Endothelial cell of umbilical vein (primary cell): ENCODE measurements at regions of chr19 and their contacts with region 1.

Region 1: DNA sequence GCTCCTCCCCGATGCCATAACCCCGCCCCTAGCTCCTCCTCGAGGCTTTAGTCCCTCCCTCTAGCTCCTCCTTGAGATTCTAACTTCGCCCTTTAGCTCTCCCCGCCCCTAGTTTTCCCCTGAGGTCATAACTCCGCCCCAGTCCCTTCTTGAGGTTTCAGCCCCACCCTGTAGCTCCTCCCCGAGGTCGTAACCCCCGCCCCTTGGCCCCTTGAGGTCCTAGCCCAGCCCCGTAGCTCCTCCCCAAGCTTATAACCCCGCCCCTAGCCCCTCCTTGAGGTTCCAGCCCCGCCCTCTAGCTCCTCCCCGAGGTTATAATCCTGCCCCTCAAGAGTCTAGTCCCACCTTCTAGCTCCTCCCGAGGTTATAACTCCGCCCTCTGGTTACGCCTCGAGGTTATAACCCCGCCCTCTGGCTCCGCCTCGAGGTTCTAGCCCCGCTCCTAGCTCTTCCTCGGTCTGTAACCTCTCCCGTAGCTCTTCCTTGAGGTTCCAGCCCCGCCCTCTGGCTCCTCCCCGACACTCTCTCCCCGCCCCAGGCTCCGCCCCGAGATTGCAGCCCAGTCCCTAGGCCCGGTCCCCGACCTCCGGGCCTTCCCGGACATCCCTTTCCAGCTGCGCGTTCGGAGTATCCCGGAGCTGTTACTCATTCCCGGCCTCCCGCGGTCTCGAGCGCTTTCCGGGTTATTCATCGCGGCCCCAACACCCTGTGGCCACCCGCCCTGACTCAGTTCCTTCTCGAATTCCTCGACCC is 1.4 kb downstream of the PLAUR start:
- DNase-seq: peak; percentile 99
- H3K4me3 ChIP-seq: peak overlapping the region; percentile 54 to 73 (median 73)
- H3K27ac ChIP-seq: peak overlapping the region; percentile 98
- H3K4me1 ChIP-seq: peaks cover 35% of the 10 kb centered on the region
- H3K27me3 ChIP-seq: no peaks in the 10 kb centered on the region
- CTCF ChIP-seq: no peak
- POLR2A ChIP-seq: no peak

Region 2: GRCh38 chr19:43619262-43620060 is 49.1 kb before region 1 on chr19 and contains the start of gene ZNF428:
- CTCF ChIA-PET with region 1: no interaction called
- POLR2A ChIA-PET with region 1: no interaction called
- dilution Hi-C with region 1: no loop called
- intact Hi-C with region 1: loop called (anchors 2 kb)
- DNase-seq: peak; percentile 95
- H3K4me3 ChIP-seq: peak within 1 kb of the TSS; percentile 31 to 75 (median 47)
- H3K27ac ChIP-seq: peak within 1 kb of the TSS; percentile 88
- H3K4me1 ChIP-seq: peaks cover 12% of the 10 kb centered on the region
- H3K27me3 ChIP-seq: no peaks in the 10 kb centered on the region
- CTCF ChIP-seq: no peak
- POLR2A ChIP-seq: peak; percentile 48
- total RNA-seq, gene ZNF428: 51.8 and 56.2 TPM in 2 replicates

Region 3: DNA sequence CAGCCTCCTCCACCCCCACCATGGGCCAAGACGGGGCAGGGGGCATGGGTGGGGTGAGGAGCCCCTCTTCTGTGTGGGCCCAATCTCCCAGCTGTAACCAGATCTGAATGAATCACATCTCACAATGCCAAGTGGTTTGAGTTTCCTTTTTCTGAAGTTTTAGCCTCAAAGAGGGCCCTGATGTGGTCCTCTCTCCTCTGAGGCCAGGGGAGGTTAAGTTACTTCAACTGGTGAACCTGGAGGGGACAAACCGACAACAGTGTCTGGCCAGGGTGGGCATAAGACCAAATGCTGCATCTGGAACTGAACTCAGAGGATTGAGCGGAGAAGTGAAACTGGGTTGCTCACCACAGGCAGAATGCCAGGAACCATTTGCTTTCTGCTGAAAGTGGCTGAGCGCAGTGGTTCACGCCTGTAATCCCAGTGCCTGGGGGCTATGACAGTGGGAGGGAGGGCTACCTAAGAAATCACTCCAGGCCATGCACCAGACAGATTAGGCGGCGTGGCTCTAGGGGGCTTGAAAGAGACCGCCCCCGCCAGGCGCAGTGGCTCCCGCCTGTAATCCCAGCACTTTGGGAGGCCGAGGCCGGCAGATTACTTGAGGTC is 31.9 kb after region 1 on chr19:
- CTCF ChIA-PET with region 1: interaction called, 13 read pairs
- POLR2A ChIA-PET with region 1: interaction called, 3 read pairs
- dilution Hi-C with region 1: no loop called
- intact Hi-C with region 1: loop called (anchors 1 kb)
- DNase-seq: peak; percentile 69
- H3K4me3 ChIP-seq: no peak overlapping the region
- H3K27ac ChIP-seq: peak overlapping the region; percentile 95
- H3K4me1 ChIP-seq: peaks cover 12% of the 10 kb centered on the region
- H3K27me3 ChIP-seq: no peaks in the 10 kb centered on the region
- CTCF ChIP-seq: no peak
- POLR2A ChIP-seq: no peak

Region 4: DNA sequence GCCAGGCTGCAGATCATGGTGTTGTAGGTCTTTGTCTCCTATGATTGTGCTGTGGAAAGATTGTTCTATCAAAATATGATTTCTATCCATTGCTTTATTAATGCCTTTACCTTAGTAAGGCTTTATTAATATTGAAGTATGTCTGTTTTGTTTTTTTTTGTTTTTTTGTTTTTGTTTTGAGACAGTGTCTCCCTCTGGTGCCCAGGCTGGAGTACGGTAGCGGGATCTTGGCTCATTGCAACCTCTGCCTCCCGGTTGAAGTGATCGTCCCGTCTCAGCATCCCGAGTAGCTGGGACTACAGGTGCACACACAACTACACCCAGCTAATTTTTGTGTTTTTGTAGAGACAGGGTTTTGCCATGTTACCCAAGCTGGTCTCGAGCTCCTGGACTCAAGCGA is 55.0 kb after region 1 on chr19:
- CTCF ChIA-PET with region 1: interaction called, 50 read pairs
- POLR2A ChIA-PET with region 1: interaction called, 9 read pairs
- dilution Hi-C with region 1: no loop called
- intact Hi-C with region 1: loop called (anchors 1 kb)
- DNase-seq: no peak
- H3K4me3 ChIP-seq: no peak overlapping the region
- H3K27ac ChIP-seq: no peak overlapping the region
- H3K4me1 ChIP-seq: peaks cover 5% of the 10 kb centered on the region
- H3K27me3 ChIP-seq: no peaks in the 10 kb centered on the region
- CTCF ChIP-seq: no peak
- POLR2A ChIP-seq: no peak

Region 5: DNA sequence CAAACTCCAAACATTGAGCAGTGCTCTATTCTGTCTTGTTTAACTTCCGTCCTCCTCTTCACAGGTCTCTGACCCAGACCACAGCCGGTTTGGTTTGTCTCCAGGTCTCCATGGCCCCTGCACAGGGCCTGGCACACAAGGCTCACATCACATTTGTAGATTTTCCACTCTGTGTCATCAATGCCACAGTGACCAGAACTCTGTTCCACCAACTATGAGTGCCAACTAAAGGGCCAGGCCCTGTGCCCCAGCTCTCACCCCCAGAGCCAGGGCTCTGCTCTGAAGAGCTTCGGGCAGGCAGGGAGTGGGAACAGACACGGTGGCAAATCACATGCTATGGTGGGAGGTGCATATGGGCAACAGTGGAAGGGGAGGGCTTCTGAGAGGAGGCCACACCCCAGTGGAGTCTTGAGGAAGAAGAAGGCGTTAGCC is 70.2 kb after region 1 on chr19:
- CTCF ChIA-PET with region 1: interaction called, 6 read pairs
- POLR2A ChIA-PET with region 1: no interaction called
- dilution Hi-C with region 1: no loop called
- intact Hi-C with region 1: loop called (anchors 5 kb)
- DNase-seq: no peak
- H3K4me3 ChIP-seq: no peak overlapping the region
- H3K27ac ChIP-seq: no peak overlapping the region
- H3K4me1 ChIP-seq: peaks cover 3% of the 10 kb centered on the region
- H3K27me3 ChIP-seq: no peaks in the 10 kb centered on the region
- CTCF ChIP-seq: no peak
- POLR2A ChIP-seq: no peak

Region 6: GRCh38 chr19:43747557-43748204 is 79.1 kb after region 1 on chr19:
- CTCF ChIA-PET with region 1: interaction called, 40 read pairs
- POLR2A ChIA-PET with region 1: interaction called, 4 read pairs
- dilution Hi-C with region 1: no loop called
- intact Hi-C with region 1: no loop called
- DNase-seq: no peak
- H3K4me3 ChIP-seq: no peak overlapping the region
- H3K27ac ChIP-seq: no peak overlapping the region
- H3K4me1 ChIP-seq: peaks cover 5% of the 10 kb centered on the region
- H3K27me3 ChIP-seq: no peaks in the 10 kb centered on the region
- CTCF ChIP-seq: no peak
- POLR2A ChIP-seq: no peak

Region 7: DNA sequence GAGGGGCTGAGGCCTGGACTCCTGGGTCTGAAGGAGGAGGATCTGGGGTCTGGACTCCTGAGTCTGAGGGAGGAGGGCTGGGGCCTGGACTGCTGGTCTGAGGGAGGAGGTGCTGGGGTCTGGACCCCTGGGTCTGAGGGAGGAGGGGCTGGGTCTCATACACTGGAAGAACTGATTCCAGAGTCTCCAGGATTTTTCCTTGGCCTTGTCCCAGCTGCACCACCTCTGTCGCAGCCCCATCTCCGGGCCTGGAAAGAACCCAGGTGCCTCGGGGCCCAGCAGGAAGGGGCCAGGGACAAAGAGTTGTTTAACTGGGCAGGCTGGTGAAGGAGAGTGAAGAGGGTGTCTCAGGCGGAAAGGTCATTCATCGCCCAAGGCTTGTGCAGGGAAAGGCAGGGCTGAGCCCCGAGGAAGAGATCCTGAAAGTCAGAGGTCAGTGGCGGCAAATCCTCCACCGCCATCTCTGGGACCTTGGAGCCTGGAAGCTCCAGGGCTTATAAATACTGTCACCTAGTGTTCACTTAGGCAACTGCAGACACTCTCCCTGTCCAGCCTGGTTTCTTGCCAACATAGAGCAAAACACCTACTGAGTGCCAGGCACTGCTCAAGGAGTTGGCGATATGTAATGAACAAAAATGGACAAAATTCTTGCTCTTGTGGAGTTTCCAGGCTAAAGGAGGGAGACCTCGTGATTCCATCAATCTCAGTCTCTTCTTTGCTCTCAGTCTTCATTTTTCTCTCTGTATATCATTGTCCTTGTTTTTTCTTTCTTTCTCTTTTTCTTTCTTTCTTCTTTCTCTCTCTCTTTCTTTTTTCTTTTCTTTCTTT is 116.6 kb after region 1 on chr19:
- CTCF ChIA-PET with region 1: interaction called, 9 read pairs
- POLR2A ChIA-PET with region 1: no interaction called
- dilution Hi-C with region 1: no loop called
- intact Hi-C with region 1: loop called (anchors 1 kb)
- DNase-seq: peak; percentile 73
- H3K4me3 ChIP-seq: no peak overlapping the region
- H3K27ac ChIP-seq: no peak overlapping the region
- H3K4me1 ChIP-seq: peaks cover 10% of the 10 kb centered on the region
- H3K27me3 ChIP-seq: no peaks in the 10 kb centered on the region
- CTCF ChIP-seq: peak; percentile 97 to 98
- POLR2A ChIP-seq: no peak